Posterior cingulate gyrus (tissue), 11 donors: ENCODE measurements at regions of chr12 and their contacts with region 1.

Region 1: GRCh38 chr12:77152623-77153193 is 87.3 kb upstream of the E2F7 start:
- DNase-seq: no peak

Region 2: GRCh38 chr12:77238368-77238767 is 85.7 kb after region 1 on chr12:
- intact Hi-C with region 1: no loop called
- DNase-seq: no peak

Region 3: GRCh38 chr12:77324763-77325468 is 172.2 kb after region 1 on chr12:
- intact Hi-C with region 1: loop called (anchors 10 kb)
- DNase-seq: peak; percentile 55 to 96 (median 77)

Region 4: GRCh38 chr12:77925536-77926108 is 772.9 kb after region 1 on chr12:
- intact Hi-C with region 1: loop called (anchors 10 kb)
- DNase-seq: peak; percentile 52 to 95 (median 70)